ENCODE measurements at regions of chr18 and their contacts with region 1.

Region 1: GRCh38 chr18:45049578-45050319 is 369.1 kb downstream of the SETBP1 start:
- DNase-seq: no peak
- ATAC-seq: no peak
- H3K4me3 ChIP-seq: no peak overlapping the region
- H3K27ac ChIP-seq: no peak overlapping the region
- H3K4me1 ChIP-seq: no peaks in the 10 kb centered on the region
- H3K27me3 ChIP-seq: no peaks in the 10 kb centered on the region
- CTCF ChIP-seq: no peak
- EP300 ChIP-seq: no peak
- POLR2A ChIP-seq: no peak
- RAD21 ChIP-seq: no peak

Region 2: GRCh38 chr18:44986933-44987332 is 62.8 kb before region 1 on chr18:
- CTCF ChIA-PET with region 1: no interaction called
- POLR2A ChIA-PET with region 1: no interaction called
- in situ Hi-C with region 1: no loop called
- intact Hi-C with region 1: loop called (anchors 2 kb)
- DNase-seq: no peak
- ATAC-seq: no peak
- H3K4me3 ChIP-seq: no peak overlapping the region
- H3K27ac ChIP-seq: no peak overlapping the region
- H3K4me1 ChIP-seq: no peaks in the 10 kb centered on the region
- H3K27me3 ChIP-seq: no peaks in the 10 kb centered on the region
- CTCF ChIP-seq: no peak
- EP300 ChIP-seq: no peak
- POLR2A ChIP-seq: no peak
- RAD21 ChIP-seq: no peak